Activated B cell treated with CpG ODN at 0.5 μM for 24 hours (primary cell): ENCODE measurements at regions of chr2 and their contacts with region 1.

Region 1: DNA sequence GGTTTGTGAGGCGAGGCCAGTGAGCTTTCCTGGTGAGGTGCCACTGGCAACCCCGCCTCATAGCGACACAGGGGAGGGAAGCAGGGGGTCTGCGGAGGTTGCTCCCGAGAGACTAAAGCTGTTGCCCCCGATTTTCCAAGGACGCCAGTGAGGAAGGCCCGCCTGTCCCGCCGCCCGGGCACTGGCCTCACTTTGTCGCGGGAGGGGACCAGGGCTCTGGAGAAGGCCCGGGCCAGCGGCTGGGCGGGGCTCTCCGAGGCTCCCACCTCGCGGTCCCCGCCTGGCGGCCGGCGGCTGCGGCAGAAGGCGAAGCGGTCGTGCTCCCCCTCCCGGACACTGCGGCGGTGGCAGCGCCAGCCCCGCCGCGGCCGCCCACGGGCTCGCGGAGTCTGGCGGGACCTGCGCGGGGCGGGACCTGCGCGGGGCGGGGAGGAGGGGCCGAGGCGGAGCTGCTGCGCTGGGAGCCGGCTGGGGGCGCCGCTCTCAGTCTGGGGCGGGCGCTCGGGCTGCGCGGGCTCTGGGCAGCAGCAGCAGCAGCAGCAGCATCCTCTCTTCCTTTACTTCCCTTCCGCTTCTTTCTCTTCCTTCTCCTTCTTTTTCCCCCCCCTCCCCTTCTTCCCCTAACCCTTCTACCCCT is at the start of gene MAP2:
- DNase-seq: peak; percentile 85
- ATAC-seq: peak; percentile 98
- H3K4me3 Mint-ChIP-seq: peak within 1 kb of the TSS; percentile 87
- H3K27ac Mint-ChIP-seq: no peak within 1 kb of the TSS
- H3K4me1 Mint-ChIP-seq: peaks cover 24% of the 10 kb centered on the region
- H3K27me3 Mint-ChIP-seq: peaks cover 4% of the 10 kb centered on the region
- CTCF ChIP-seq: peak; percentile 20
- total RNA-seq, gene MAP2: 1.4 and 1.9 TPM in 2 replicates

Region 2: GRCh38 chr2:209380293-209380692 is 43.4 kb before region 1 on chr2:
- CTCF ChIA-PET with region 1: no interaction called
- POLR2A ChIA-PET with region 1: no interaction called
- intact Hi-C with region 1: loop called (anchors 1 kb)
- DNase-seq: no peak
- ATAC-seq: peak; percentile 80
- H3K4me3 Mint-ChIP-seq: no peak overlapping the region
- H3K27ac Mint-ChIP-seq: no peak overlapping the region
- H3K4me1 Mint-ChIP-seq: peaks cover 9% of the 10 kb centered on the region
- H3K27me3 Mint-ChIP-seq: peaks cover 16% of the 10 kb centered on the region
- CTCF ChIP-seq: no peak

Region 3: GRCh38 chr2:209473930-209474419 is 50.3 kb after region 1 on chr2:
- CTCF ChIA-PET with region 1: no interaction called
- POLR2A ChIA-PET with region 1: no interaction called
- intact Hi-C with region 1: no loop called
- DNase-seq: no peak
- ATAC-seq: no peak
- H3K4me3 Mint-ChIP-seq: no peak overlapping the region
- H3K27ac Mint-ChIP-seq: no peak overlapping the region
- H3K4me1 Mint-ChIP-seq: no peaks in the 10 kb centered on the region
- H3K27me3 Mint-ChIP-seq: no peaks in the 10 kb centered on the region
- CTCF ChIP-seq: no peak

Region 4: GRCh38 chr2:209556354-209556961 is 132.8 kb after region 1 on chr2:
- CTCF ChIA-PET with region 1: interaction called, 20 read pairs
- POLR2A ChIA-PET with region 1: no interaction called
- intact Hi-C with region 1: loop called (anchors 1 kb)
- DNase-seq: no peak
- ATAC-seq: peak; percentile 61
- H3K4me3 Mint-ChIP-seq: no peak overlapping the region
- H3K27ac Mint-ChIP-seq: no peak overlapping the region
- H3K4me1 Mint-ChIP-seq: no peaks in the 10 kb centered on the region
- H3K27me3 Mint-ChIP-seq: no peaks in the 10 kb centered on the region
- CTCF ChIP-seq: no peak

Region 5: DNA sequence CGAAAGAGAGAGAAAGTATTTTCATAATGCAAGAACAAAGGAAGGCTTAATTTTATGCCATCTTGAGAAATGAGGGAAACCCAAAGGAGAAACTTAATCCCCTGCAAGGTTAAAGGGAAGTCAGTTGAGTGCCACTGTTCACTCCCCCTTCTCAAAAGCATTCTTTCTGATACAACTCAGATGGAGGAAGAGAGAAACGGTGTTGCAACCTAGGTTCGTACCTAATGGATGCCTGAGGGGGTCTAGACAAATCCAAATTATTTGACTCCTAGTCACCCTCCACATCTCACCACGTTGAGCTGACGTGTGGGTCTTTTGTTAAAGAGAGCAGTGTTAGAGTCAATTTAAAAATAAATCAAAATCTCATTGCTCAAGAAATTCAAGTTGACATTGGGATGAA is 295.4 kb after region 1 on chr2:
- CTCF ChIA-PET with region 1: no interaction called
- POLR2A ChIA-PET with region 1: no interaction called
- intact Hi-C with region 1: no loop called
- DNase-seq: no peak
- ATAC-seq: no peak
- H3K4me3 Mint-ChIP-seq: no peak overlapping the region
- H3K27ac Mint-ChIP-seq: no peak overlapping the region
- H3K4me1 Mint-ChIP-seq: no peaks in the 10 kb centered on the region
- H3K27me3 Mint-ChIP-seq: no peaks in the 10 kb centered on the region
- CTCF ChIP-seq: no peak

Region 6: GRCh38 chr2:209960676-209961630 is 537.3 kb after region 1 on chr2:
- CTCF ChIA-PET with region 1: interaction called, 5 read pairs
- POLR2A ChIA-PET with region 1: no interaction called
- intact Hi-C with region 1: loop called (anchors 1 kb)
- DNase-seq: no peak
- ATAC-seq: peak; percentile 47
- H3K4me3 Mint-ChIP-seq: no peak overlapping the region
- H3K27ac Mint-ChIP-seq: no peak overlapping the region
- H3K4me1 Mint-ChIP-seq: no peaks in the 10 kb centered on the region
- H3K27me3 Mint-ChIP-seq: peaks cover 8% of the 10 kb centered on the region
- CTCF ChIP-seq: peak; percentile 31

Region 7: DNA sequence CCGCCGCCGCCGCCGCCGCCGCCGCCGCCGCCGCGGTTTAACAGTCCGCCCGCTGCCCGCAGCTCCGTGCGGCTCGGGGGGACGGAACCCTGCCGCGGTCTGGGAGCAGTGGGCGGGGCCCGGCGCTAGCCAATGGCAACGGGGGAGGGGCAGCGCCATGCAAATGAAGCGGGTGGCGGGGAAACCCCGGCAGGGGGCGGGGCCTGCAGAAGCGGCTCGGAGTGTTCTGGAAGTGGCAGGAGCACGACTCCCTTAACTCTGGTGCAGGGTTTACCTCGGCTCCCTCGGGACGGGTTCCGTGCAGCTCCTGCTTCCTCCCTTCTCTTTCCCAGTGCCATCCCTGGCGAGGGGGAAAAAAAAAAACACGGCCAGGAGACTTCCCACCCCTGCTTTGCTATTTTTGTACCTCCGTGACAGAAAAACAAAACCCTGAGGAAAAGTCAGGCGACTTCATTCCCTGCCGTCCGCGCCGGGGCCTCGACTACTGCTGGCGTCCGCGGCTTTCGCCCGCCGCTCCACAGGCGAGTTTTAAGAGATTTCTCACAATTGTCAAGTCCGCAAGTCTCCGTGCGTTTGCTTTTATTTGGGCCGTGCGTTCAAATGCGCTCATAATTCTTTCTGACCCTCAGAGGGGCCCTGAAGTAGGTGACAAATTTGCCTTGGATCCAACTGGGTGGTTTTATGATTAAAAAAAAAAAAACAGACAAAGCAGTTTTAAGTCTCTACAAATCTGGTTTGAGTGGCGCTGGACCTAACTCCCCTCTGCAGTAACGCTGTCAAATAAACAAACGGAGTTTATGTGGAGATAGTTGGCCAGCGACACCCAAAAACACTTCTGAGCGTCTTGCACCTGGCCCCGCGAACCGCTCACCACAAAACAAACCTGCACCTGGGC is 747.9 kb after region 1 on chr2 and contains the start of gene KANSL1L:
- CTCF ChIA-PET with region 1: no interaction called
- POLR2A ChIA-PET with region 1: no interaction called
- intact Hi-C with region 1: loop called (anchors 2 kb)
- DNase-seq: peak; percentile 99
- ATAC-seq: peak; percentile 83
- H3K4me3 Mint-ChIP-seq: peak within 1 kb of the TSS; percentile 97
- H3K27ac Mint-ChIP-seq: peak within 1 kb of the TSS; percentile 94
- H3K4me1 Mint-ChIP-seq: peaks cover 24% of the 10 kb centered on the region
- H3K27me3 Mint-ChIP-seq: peaks cover 8% of the 10 kb centered on the region
- CTCF ChIP-seq: no peak
- total RNA-seq, gene KANSL1L: 13.1 and 14.2 TPM in 2 replicates

Region 8: GRCh38 chr2:210476194-210477128 is 1052.8 kb after region 1 on chr2 and contains the start of gene LANCL1:
- CTCF ChIA-PET with region 1: no interaction called
- POLR2A ChIA-PET with region 1: no interaction called
- intact Hi-C with region 1: loop called (anchors 10 kb)
- DNase-seq: peak; percentile 70
- ATAC-seq: peak; percentile 100
- H3K4me3 Mint-ChIP-seq: peak within 1 kb of the TSS; percentile 99
- H3K27ac Mint-ChIP-seq: peak within 1 kb of the TSS; percentile 98
- H3K4me1 Mint-ChIP-seq: peaks cover 31% of the 10 kb centered on the region
- H3K27me3 Mint-ChIP-seq: no peaks in the 10 kb centered on the region
- CTCF ChIP-seq: no peak
- total RNA-seq, gene LANCL1: 30.4 and 30.8 TPM in 2 replicates